Thyroid gland (tissue), 4 donors: ENCODE measurements at regions of chr6 and their contacts with region 1.

Region 1: GRCh38 chr6:69835414-69836179 is 30.8 kb upstream of the COL19A1 start:
- DNase-seq: no peak
- H3K4me3 ChIP-seq: no peak overlapping the region
- H3K27ac ChIP-seq: no peak overlapping the region
- H3K4me1 ChIP-seq: no peaks in the 10 kb centered on the region
- H3K27me3 ChIP-seq: no peaks in the 10 kb centered on the region
- CTCF ChIP-seq: peak; percentile 35 to 79 (median 56)
- POLR2A ChIP-seq: no peak

Region 2: GRCh38 chr6:70107852-70108629 is 272.4 kb after region 1 on chr6:
- intact Hi-C with region 1: loop called (anchors 5 kb)
- DNase-seq: no peak
- H3K4me3 ChIP-seq: no peak overlapping the region
- H3K27ac ChIP-seq: no peak overlapping the region
- H3K4me1 ChIP-seq: no peaks in the 10 kb centered on the region
- H3K27me3 ChIP-seq: no peaks in the 10 kb centered on the region
- CTCF ChIP-seq: peak; percentile 11 to 65 (median 43)
- POLR2A ChIP-seq: no peak